ENCODE measurements at regions of chr19 and their contacts with region 1.

Region 1: GRCh38 chr19:4723367-4724187 is at the start of gene DPP9:
- DNase-seq: peak; percentile 98 to 99 (median 99)
- H3K4me3 ChIP-seq: peak within 1 kb of the TSS; percentile 89 to 96
- H3K4me3 Mint-ChIP-seq: peak within 1 kb of the TSS; percentile 90 to 97 (median 93)
- H3K27ac ChIP-seq: peak within 1 kb of the TSS; percentile 86
- H3K27ac Mint-ChIP-seq: peak within 1 kb of the TSS; percentile 95 to 100 (median 98)
- H3K4me1 ChIP-seq: peaks cover 36% of the 10 kb centered on the region
- H3K4me1 Mint-ChIP-seq: peaks cover 15 to 47% (median 31%) of the 10 kb centered on the region in 4 donors
- H3K27me3 ChIP-seq: no peaks in the 10 kb centered on the region
- H3K27me3 Mint-ChIP-seq: peaks cover 4 to 10% of the 10 kb centered on the region in 2 donors
- total RNA-seq, gene DPP9: 86.9 to 93.9 TPM

Region 2: DNA sequence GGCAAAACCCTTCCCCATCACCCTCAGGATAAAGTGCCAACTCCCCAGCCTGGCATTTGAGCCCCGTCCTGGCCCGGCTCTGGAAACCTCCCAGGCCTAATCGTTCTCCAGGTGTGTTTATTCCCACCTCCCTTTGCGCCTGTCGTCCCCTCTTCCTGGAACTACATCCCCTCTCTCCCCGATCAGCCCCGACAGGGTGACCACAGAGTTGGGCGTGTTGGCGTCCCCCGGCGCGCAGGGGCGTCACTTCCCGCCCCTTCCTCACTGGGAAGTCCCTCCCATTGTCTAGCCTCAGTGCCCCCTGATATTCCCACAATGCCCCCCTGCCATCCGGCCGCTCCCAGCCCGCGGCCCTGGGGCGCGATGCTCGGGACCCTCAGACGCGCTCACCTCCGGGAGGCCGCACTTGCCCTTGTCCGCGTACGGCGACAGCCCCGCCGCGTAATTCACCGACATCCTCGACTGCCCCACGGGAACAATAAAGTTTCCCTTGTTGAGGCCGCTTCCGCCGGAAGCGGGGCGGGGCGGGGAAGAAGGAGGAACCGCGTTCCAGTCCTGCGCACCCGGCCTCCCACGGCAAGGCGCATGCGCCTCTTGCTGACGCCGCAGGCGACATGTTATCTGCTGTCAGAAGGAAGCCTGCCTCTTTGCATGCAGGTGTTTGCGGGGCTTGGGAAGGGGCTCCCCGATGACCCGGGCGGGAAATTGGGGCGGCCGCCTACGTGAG is 541.3 kb before region 1 on chr19 and contains the starts of genes ANKRD24 and SIRT6:
- CTCF ChIA-PET with region 1: no interaction called
- POLR2A ChIA-PET with region 1: no interaction called
- intact Hi-C with region 1: loop called (anchors 5 kb)
- DNase-seq: peak; percentile 95 to 96 (median 96)
- H3K4me3 ChIP-seq: peak within 1 kb of the TSS; percentile 91 to 97
- H3K4me3 Mint-ChIP-seq: peak within 1 kb of the TSS; percentile 94 to 99 (median 96)
- H3K27ac ChIP-seq: peak within 1 kb of the TSS; percentile 81
- H3K27ac Mint-ChIP-seq: peak within 1 kb of the TSS; percentile 92 to 100 (median 96)
- H3K4me1 ChIP-seq: peaks cover 27% of the 10 kb centered on the region
- H3K4me1 Mint-ChIP-seq: peaks cover 30 to 41% (median 33%) of the 10 kb centered on the region in 4 donors
- H3K27me3 ChIP-seq: no peaks in the 10 kb centered on the region
- H3K27me3 Mint-ChIP-seq: peaks cover 0 to 3% of the 10 kb centered on the region in 2 donors
- total RNA-seq, gene ANKRD24: 1.9 to 2.9 TPM
- total RNA-seq, gene SIRT6: 26.8 to 27.0 TPM

Region 3: GRCh38 chr19:4471403-4472173 is 252.0 kb before region 1 on chr19:
- CTCF ChIA-PET with region 1: no interaction called
- POLR2A ChIA-PET with region 1: interaction called, 10 read pairs
- intact Hi-C with region 1: no loop called
- DNase-seq: peak; percentile 96 to 100 (median 99)
- H3K4me3 ChIP-seq: peak overlapping the region; percentile 27 to 68
- H3K4me3 Mint-ChIP-seq: no peak overlapping the region
- H3K27ac ChIP-seq: peak overlapping the region; percentile 74
- H3K27ac Mint-ChIP-seq: no peak overlapping the region
- H3K4me1 ChIP-seq: peaks cover 30% of the 10 kb centered on the region
- H3K4me1 Mint-ChIP-seq: peaks cover 9 to 26% (median 16%) of the 10 kb centered on the region in 4 donors
- H3K27me3 ChIP-seq: no peaks in the 10 kb centered on the region
- H3K27me3 Mint-ChIP-seq: no peaks in the 10 kb centered on the region

Region 4: DNA sequence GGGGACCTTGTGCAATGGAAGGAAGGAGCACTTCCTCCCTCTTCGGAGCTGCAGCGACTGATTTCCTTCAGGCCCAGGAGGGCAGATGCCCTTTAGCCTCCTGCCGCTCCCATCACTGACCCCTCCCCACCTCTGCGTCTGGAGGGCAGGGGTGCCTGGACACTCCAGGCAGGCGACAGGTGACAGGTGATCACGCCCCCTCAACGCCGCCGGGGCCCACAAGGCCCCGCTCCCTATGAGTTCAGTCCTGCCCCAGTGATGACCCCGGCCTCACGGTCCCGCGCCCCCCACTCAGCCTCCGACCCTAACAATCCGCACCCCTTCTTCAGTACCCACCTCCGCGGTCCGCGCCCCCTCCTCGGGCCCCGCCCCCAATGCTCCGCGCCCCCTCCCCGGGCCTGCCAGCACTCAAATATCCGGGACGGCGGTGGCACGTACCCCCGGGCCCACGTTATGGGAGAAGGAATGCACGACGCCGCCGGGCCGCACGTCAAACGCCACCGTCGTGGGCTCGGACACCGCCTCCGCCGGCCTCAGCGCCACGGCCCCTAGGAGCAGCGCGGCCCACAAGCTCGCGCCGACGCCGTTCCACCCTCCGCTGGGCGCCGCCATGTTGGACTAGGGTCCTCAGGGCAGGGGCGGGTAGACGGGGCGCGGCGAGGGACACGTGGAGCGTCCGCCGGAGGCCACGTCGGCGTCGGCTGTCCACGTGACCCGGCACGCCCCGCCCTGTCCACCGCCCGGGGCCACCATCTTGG is 53.7 kb before region 1 on chr19 and contains the start of gene MYDGF:
- CTCF ChIA-PET with region 1: no interaction called
- POLR2A ChIA-PET with region 1: interaction called, 11 read pairs
- intact Hi-C with region 1: loop called (anchors 1 kb)
- DNase-seq: peak; percentile 90 to 94 (median 91)
- H3K4me3 ChIP-seq: peak within 1 kb of the TSS; percentile 49 to 79
- H3K4me3 Mint-ChIP-seq: peak within 1 kb of the TSS; percentile 87 to 91 (median 90)
- H3K27ac ChIP-seq: peak within 1 kb of the TSS; percentile 79
- H3K27ac Mint-ChIP-seq: peak within 1 kb of the TSS; percentile 76 to 93 (median 90)
- H3K4me1 ChIP-seq: peaks cover 16% of the 10 kb centered on the region
- H3K4me1 Mint-ChIP-seq: peaks cover 7 to 23% (median 13%) of the 10 kb centered on the region in 4 donors
- H3K27me3 ChIP-seq: no peaks in the 10 kb centered on the region
- H3K27me3 Mint-ChIP-seq: no peaks in the 10 kb centered on the region
- total RNA-seq, gene MYDGF: 43.0 to 46.4 TPM

Region 5: DNA sequence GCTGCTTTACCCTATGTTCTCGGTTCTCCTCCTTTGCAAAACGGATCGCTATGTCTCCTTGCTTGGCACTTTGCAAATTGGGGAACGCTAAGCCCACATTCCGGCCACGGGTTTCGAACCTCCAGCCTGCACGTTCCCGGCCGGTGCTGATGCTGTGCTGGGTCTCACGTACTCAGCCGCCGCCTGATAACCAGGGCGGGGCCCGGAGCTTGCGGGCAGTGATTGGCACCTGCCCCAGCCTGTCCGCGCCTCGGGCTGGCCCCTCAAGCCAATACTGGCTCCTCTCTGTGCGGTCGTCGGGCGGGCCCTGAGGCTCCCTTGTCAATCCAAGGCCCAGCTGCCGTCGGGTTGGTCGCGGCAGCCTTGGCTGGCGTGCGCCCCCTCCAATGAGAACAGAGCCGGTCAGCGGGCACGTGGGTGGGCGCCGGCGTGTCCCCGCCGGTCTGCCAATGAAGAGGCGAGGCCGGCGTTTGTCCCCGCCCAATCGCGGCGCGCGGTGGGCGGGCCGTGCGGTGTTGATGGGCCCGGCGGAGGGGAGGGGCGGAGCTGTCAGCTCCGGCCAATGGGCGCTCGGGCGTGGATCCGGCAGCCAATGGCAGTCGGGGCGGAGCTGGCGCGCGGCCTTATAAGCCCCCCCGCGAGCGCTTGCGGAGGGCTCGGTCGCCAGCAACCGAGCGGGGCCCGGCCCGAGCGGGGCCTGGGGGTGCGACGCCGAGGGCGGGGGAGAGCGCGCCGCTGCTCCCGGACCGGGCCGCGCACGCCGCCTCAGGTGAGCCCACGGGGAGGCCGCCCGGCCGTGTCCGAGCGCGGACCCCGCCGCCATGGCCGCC is 245.1 kb after region 1 on chr19 and contains the start of gene KDM4B:
- CTCF ChIA-PET with region 1: no interaction called
- POLR2A ChIA-PET with region 1: interaction called, 12 read pairs
- intact Hi-C with region 1: loop called (anchors 1 kb)
- DNase-seq: peak; percentile 99 to 100 (median 100)
- H3K4me3 ChIP-seq: peak within 1 kb of the TSS; percentile 33 to 66
- H3K4me3 Mint-ChIP-seq: peak within 1 kb of the TSS; percentile 89 to 97 (median 92)
- H3K27ac ChIP-seq: peak within 1 kb of the TSS; percentile 42
- H3K27ac Mint-ChIP-seq: peak within 1 kb of the TSS; percentile 83 to 97 (median 94)
- H3K4me1 ChIP-seq: peaks cover 37% of the 10 kb centered on the region
- H3K4me1 Mint-ChIP-seq: peaks cover 24 to 40% (median 33%) of the 10 kb centered on the region in 4 donors
- H3K27me3 ChIP-seq: no peaks in the 10 kb centered on the region
- H3K27me3 Mint-ChIP-seq: no peaks in the 10 kb centered on the region
- total RNA-seq, gene KDM4B: 47.9 to 50.4 TPM

Measured in CD4-positive, alpha-beta memory T cell (primary cell).